HCT116 (cell line): ENCODE measurements at regions of chr18 and their contacts with region 1.

Region 1: DNA sequence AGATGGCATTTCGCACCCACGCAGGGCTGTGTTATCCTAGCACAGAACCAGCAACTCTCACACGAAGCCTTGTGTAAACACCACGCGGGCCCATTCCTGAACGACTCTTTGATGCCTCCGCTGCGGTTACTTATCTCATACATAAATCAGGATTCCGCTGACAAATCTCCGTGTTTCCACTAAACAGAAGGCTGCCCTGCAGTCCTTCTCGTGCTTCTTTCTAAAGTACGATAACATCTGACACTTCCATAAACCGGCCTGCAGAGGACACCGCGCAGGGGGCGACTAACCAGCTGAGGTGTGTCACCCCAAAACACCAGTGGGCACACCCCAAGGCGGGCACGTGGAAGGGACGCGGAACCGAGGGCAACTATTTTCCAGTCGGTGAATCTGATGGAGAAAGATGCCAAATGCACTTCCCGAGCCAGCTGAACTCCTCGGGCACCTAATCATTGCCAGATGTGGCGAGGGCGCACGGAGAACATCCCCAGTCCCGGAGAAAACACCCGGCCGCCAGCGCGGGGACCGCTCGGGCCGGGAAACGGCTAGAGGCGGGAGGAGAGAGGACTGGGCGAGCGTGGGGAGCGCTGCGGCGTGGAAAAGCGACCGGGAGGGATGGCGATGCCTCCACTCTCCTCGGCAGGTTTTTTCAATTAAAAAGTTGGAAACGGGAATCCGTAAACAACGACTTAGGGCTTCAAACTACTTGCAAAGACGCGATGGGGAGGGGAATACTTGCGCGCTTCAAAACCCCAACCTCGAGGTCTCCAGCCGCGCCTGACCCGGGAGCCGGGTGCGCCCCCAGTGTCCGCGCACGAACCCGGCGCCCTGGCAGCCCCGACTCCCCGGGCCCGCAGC is 721 bp downstream of the COLEC12 start:
- DNase-seq: no peak
- ATAC-seq: peak; percentile 73
- H3K4me3 ChIP-seq: peak overlapping the region; percentile 29 to 37
- H3K27ac ChIP-seq: no peak overlapping the region
- H3K4me1 ChIP-seq: peaks cover 11 to 14% of the 10 kb centered on the region in 2 experiments; a peak in 3 of 4 replicates
- H3K27me3 ChIP-seq: peaks cover 31% of the 10 kb centered on the region
- CTCF ChIP-seq: no peak
- POLR2A ChIP-seq: no peak
- RAD21 ChIP-seq: no peak

Region 2: DNA sequence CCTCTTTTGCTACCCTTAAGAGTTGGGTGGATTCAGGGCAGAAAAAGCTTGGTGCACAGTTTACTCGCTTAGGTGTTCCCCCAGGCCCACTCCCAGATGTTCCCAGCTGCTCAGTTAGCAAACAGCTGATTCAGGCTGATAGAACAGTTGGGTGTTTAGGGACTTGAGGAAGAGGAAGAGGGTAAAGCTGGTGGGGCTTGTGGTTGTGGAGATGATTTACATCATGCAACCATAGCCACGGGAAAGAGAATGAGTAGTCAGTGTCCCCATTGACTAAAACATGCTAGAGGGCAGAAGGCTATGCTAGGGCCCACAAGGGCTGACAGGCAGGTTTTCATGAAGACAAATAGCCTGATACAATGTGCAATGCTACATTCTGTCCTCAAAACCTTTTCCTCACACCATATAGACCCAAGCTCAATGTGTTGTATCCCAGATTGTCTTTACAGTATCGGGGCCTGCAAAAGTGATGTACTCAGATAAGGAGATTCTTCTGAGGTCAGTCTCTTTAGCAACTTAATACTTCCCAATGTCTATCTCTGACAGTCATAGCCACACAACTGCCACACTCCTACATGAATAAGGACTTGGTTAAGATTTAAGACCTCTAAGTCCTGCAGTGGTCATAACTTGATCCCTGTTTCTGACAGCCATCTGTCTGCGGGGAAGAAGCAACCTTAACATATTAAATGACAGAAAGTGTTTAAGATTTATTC is 14.9 kb before region 1 on chr18:
- CTCF ChIA-PET with region 1: no interaction called
- POLR2A ChIA-PET with region 1: no interaction called
- RAD21 ChIA-PET with region 1: no interaction called
- intact Hi-C with region 1: no loop called
- DNase-seq: no peak
- ATAC-seq: no peak
- H3K4me3 ChIP-seq: no peak overlapping the region
- H3K27ac ChIP-seq: no peak overlapping the region
- H3K4me1 ChIP-seq: peaks cover 0 to 8% of the 10 kb centered on the region in 2 experiments; a peak in 2 of 4 replicates
- H3K27me3 ChIP-seq: no peaks in the 10 kb centered on the region
- CTCF ChIP-seq: no peak
- POLR2A ChIP-seq: no peak
- RAD21 ChIP-seq: no peak

Region 3: GRCh38 chr18:543447-544078 is 43.8 kb after region 1 on chr18:
- CTCF ChIA-PET with region 1: no interaction called
- POLR2A ChIA-PET with region 1: no interaction called
- RAD21 ChIA-PET with region 1: no interaction called
- intact Hi-C with region 1: no loop called
- DNase-seq: no peak
- ATAC-seq: no peak
- H3K4me3 ChIP-seq: no peak overlapping the region
- H3K27ac ChIP-seq: no peak overlapping the region
- H3K4me1 ChIP-seq: no peaks in the 10 kb centered on the region
- H3K27me3 ChIP-seq: 0 out of 2 replicates have a peak, but pooled peaks cover 7% of the 10 kb centered on the region
- CTCF ChIP-seq: no peak
- POLR2A ChIP-seq: no peak
- RAD21 ChIP-seq: no peak

Region 4: GRCh38 chr18:596288-596881 is 96.6 kb after region 1 on chr18:
- CTCF ChIA-PET with region 1: no interaction called
- POLR2A ChIA-PET with region 1: no interaction called
- RAD21 ChIA-PET with region 1: no interaction called
- intact Hi-C with region 1: loop called (anchors 5 kb)
- DNase-seq: peak; percentile 47
- ATAC-seq: peak; percentile 85
- H3K4me3 ChIP-seq: peak overlapping the region; percentile 18 to 41
- H3K27ac ChIP-seq: no peak overlapping the region
- H3K4me1 ChIP-seq: peaks cover 0 to 15% of the 10 kb centered on the region in 2 experiments; a peak in 2 of 4 replicates
- H3K27me3 ChIP-seq: no peaks in the 10 kb centered on the region
- CTCF ChIP-seq: no peak
- POLR2A ChIP-seq: no peak
- RAD21 ChIP-seq: no peak

Region 5: DNA sequence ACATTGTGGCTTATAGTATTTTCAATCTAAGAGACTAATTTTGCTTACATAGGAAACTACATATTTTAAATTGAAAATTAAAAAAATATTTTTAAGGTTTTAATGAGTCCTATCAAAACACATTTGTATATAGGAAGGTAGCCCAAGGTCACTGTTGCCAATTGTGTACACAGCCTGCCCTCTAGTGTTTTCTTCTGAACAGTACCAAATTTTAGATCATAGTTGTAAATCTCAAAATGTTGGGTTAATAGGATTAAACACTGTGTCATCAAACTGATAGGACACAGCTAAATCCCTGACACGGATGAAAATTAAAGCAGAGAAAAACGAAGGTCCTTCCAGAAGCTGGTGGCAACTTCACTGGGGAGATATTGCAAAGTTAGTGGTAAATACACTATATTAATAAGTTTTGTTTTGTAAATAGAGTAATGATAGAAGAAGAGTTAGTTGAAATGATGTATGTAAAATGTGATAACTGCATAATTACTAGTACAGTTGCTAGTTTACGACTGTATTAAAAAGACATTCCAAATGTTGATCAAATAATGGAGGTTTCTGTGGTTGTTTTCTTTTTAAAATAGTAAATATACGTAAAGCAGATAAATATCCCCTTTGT is 116.7 kb after region 1 on chr18:
- CTCF ChIA-PET with region 1: no interaction called
- POLR2A ChIA-PET with region 1: no interaction called
- RAD21 ChIA-PET with region 1: no interaction called
- intact Hi-C with region 1: loop called (anchors 5 kb)
- DNase-seq: peak; percentile 35
- ATAC-seq: peak; percentile 78
- H3K4me3 ChIP-seq: no peak overlapping the region
- H3K27ac ChIP-seq: no peak overlapping the region
- H3K4me1 ChIP-seq: no peaks in the 10 kb centered on the region
- H3K27me3 ChIP-seq: no peaks in the 10 kb centered on the region
- CTCF ChIP-seq: peak; percentile 62 to 76 (median 69)
- POLR2A ChIP-seq: no peak
- RAD21 ChIP-seq: peak; percentile 85